Heart left ventricle (tissue), 16 donors: ENCODE measurements at regions of chr12 and their contacts with region 1.

Region 1: GRCh38 chr12:25241167-25242020 is 9.3 kb downstream of the KRAS start:
- DNase-seq: no peak
- ATAC-seq: no peak
- H3K4me3 ChIP-seq: no peak overlapping the region
- H3K27ac ChIP-seq: no peak overlapping the region
- H3K4me1 ChIP-seq: peaks cover 0 to 10% (median 0%) of the 10 kb centered on the region in 12 donors
- H3K27me3 ChIP-seq: no peaks in the 10 kb centered on the region
- CTCF ChIP-seq: peak; percentile 49 to 81 (median 64)
- POLR2A ChIP-seq: no peak

Region 2: DNA sequence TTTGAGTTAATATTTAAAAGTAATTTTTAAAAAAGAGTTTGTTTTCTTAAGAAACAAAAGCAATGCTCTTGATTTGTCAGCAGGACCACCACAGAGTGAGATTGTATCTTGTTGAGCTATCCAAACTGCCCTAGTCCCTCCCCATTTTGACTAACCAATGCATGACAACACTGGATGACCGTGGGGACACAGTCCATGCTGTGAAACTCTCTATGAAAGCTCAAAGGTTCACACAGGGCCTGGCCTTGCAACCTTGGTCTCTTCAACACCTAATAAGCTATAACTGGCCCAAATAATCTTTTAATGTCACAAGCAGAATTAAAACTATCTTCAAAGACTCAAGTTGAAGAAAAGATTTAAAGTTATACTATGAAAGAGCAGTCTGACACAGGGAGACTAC is 32.8 kb before region 1 on chr12:
- intact Hi-C with region 1: loop called in 1 of 10 experiments (anchors 5 kb)
- DNase-seq: no peak
- ATAC-seq: no peak
- H3K4me3 ChIP-seq: no peak overlapping the region
- H3K27ac ChIP-seq: no peak overlapping the region
- H3K4me1 ChIP-seq: no peaks in the 10 kb centered on the region
- H3K27me3 ChIP-seq: no peaks in the 10 kb centered on the region
- CTCF ChIP-seq: no peak
- POLR2A ChIP-seq: no peak

Region 3: GRCh38 chr12:25447046-25447445 is 205.7 kb after region 1 on chr12:
- intact Hi-C with region 1: no loop called
- DNase-seq: no peak
- ATAC-seq: no peak
- H3K4me3 ChIP-seq: no peak overlapping the region
- H3K27ac ChIP-seq: no peak overlapping the region
- H3K4me1 ChIP-seq: no peaks in the 10 kb centered on the region
- H3K27me3 ChIP-seq: peaks cover 0 to 6% (median 0%) of the 10 kb centered on the region in 9 donors
- CTCF ChIP-seq: no peak
- POLR2A ChIP-seq: no peak